Dorsolateral prefrontal cortex (tissue), 120 donors: ENCODE measurements at regions of chr3 and their contacts with region 1.

Region 1: DNA sequence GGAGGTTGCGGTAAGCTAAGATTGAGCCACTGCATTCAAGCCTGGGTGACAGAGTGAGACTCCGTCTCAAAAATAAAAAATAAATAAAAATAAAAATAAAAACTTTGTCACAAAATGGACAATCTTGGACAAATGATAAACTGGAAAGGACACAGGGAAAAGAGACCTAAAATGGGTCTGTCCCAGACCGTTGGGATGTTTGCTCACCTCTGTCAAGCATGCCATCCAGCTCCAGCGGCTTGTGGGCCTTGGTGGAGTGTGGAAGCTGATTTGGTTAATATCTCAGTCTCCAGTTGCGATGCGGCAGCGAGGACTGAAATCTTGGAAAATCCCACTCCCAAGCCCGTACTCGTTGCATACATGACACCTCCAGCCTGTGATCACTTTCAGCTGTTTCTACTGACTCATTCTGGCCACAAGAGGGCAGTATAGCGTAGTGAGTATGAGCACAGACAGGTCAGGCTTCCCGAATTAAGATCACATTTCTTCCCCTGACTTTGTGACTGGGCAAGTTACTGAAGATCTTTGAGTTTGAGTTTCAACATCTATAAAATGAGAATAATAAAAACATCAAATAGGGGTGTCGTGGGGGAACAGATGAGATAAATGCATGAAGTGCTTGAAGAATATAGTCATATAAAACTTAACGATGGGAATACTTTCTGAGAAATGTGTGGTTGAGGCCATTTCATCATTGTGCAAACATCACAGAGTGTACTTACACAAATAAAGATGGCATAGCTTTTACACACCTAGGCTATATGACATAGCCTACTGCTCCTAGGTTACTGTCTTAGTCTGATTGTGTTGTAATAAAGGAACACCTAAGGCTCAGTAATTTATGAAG is 19.6 kb upstream of the MOBP start:
- DNase-seq: peak in 9 of 10 donors; percentile 28 to 92 (median 69)
- H3K4me3 ChIP-seq: peak overlapping the region in 25 of 59 donors; percentile 3 to 62 (median 31)
- H3K27ac ChIP-seq: peak overlapping the region; percentile 13 to 93 (median 82)
- H3K27me3 ChIP-seq: no peaks in the 10 kb centered on the region
- CTCF ChIP-seq: peak; percentile 81 to 98 (median 93)

Region 2: GRCh38 chr3:39467394-39468107 is 19.7 kb after region 1 on chr3 and contains the start of gene MOBP:
- intact Hi-C with region 1: loop called in 1 of 2 experiments (anchors 2 kb)
- DNase-seq: no peak
- H3K4me3 ChIP-seq: peak within 1 kb of the TSS in 58 of 59 donors; percentile 14 to 82 (median 53)
- H3K27ac ChIP-seq: peak within 1 kb of the TSS; percentile 63 to 100 (median 95)
- H3K27me3 ChIP-seq: peaks cover 0 to 3% (median 0%) of the 10 kb centered on the region in 45 donors
- CTCF ChIP-seq: no peak
- total RNA-seq, gene MOBP: 40.9 to 1,548 (median 379) TPM

Region 3: DNA sequence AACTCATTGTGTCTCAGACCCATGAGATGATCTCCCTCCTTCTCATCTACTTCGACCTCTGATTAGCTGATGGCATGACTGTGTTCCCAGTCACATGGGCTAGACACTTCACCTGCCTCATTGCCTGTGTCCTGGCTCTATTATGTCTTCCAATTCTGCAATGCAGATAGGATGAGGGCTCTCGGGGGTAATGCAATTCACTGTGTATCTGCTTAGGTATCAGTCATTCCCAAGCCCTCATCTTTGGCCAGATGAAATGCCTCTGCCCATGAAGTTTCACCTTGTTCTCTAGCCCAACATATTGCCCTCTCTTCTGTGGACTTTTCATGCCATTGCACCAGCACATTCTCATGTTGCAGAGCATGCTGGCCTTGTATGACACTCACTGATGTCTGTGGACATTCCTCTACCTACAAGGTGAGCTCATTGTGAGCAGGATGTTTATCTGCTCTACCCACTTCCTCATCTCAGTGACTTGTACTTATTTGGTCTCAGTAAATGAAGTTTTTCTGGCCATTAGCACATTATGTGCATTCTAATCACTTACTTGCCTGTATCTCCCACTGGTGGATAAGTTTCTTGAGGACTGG is 51.9 kb after region 1 on chr3:
- intact Hi-C with region 1: loop called (anchors 1 to 2 kb)
- DNase-seq: no peak
- H3K4me3 ChIP-seq: peak overlapping the region in 10 of 59 donors; percentile 3 to 64 (median 60)
- H3K27ac ChIP-seq: peak overlapping the region in 33 of 59 donors; percentile 18 to 97 (median 76)
- H3K27me3 ChIP-seq: peaks cover 0 to 11% (median 0%) of the 10 kb centered on the region in 45 donors
- CTCF ChIP-seq: no peak